Activated CD8-positive, alpha-beta T cell treated with anti-CD3 and anti-CD28 coated beads, Interleukin-2, amount 10 ng/mL, durations not matched to agents 7 days and 5 days (primary cell): ENCODE measurements at regions of chr17 and their contacts with region 1.

Region 1: GRCh38 chr17:7045909-7046724 is 2.2 kb upstream of the SLC16A11 start:
- DNase-seq: peak; percentile 68
- ATAC-seq: peak; percentile 43
- H3K4me3 Mint-ChIP-seq: peak overlapping the region; percentile 73
- H3K27ac Mint-ChIP-seq: peak overlapping the region; percentile 66
- H3K4me1 Mint-ChIP-seq: peaks cover 37% of the 10 kb centered on the region
- H3K27me3 Mint-ChIP-seq: peaks cover 10% of the 10 kb centered on the region

Region 2: DNA sequence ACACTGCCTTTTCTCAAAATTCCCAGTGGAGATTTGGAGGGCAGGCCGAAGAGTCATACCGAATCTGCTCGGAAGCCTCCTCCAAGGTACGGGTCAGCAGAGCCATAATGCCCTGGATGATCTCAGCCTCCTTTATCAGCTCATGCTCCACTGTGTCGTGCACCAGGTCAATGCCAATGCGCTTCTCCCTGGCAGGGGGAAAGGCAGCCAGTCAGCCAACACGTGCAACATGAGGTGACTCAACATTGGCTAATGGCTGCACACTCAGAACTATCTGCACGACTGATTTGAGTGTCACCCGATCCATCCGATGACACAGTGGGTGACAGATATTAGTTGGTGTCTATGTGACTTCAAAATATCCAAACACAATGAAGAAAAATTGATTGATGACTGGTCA is 230.3 kb before region 1 on chr17:
- CTCF ChIA-PET with region 1: no interaction called
- POLR2A ChIA-PET with region 1: no interaction called
- DNase-seq: no peak
- ATAC-seq: no peak
- H3K4me3 Mint-ChIP-seq: no peak overlapping the region
- H3K27ac Mint-ChIP-seq: no peak overlapping the region
- H3K4me1 Mint-ChIP-seq: no peaks in the 10 kb centered on the region
- H3K27me3 Mint-ChIP-seq: peaks cover 30% of the 10 kb centered on the region

Region 3: GRCh38 chr17:7021993-7022778 is 23.9 kb before region 1 on chr17:
- CTCF ChIA-PET with region 1: interaction called, 31 read pairs
- POLR2A ChIA-PET with region 1: interaction called, 4 read pairs
- DNase-seq: peak; percentile 86
- ATAC-seq: peak; percentile 74
- H3K4me3 Mint-ChIP-seq: peak overlapping the region; percentile 8
- H3K27ac Mint-ChIP-seq: peak overlapping the region; percentile 55
- H3K4me1 Mint-ChIP-seq: peaks cover 73% of the 10 kb centered on the region
- H3K27me3 Mint-ChIP-seq: peaks cover 2% of the 10 kb centered on the region

Region 4: DNA sequence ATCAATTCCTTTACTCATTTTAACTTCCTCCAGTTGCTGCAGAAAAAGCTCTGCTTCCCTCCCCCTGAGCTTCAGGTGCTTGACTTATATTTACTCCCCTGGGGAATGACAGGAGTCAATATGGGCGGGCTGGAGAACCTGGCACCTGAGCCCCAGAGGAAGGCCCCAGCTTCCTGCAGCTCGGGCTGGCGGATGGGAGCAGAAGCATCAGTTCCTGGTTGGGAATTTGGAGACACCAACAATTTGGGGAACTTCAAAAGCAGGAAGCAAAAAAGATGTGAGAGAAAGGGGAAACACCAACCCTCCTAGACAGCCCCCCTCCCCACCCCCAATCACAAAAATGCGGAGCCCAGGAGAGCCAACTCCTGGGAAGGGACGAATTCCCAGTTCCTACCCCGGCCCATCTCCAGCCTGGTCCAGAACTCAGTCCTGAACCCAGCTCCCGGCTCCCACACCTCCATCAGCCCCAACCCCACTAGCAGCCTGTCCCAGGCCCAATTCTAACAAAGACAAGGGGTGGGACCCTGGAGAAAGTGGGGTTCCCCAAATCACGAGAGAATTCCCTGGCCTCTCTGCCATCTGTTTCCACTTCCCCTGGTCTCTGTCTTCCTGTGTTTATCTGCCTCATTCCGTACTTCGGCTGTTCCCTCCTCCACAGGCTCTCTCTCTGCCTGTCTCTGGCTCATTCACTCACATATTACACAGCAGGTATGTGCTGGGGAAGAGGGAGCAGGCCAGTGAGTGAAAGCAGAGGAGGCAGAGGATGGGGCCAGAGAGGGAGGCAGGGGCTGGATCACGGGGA is 84.7 kb after region 1 on chr17:
- CTCF ChIA-PET with region 1: interaction called, 395 read pairs
- POLR2A ChIA-PET with region 1: interaction called, 16 read pairs
- DNase-seq: no peak
- ATAC-seq: no peak
- H3K4me3 Mint-ChIP-seq: no peak overlapping the region
- H3K27ac Mint-ChIP-seq: no peak overlapping the region
- H3K4me1 Mint-ChIP-seq: peaks cover 11% of the 10 kb centered on the region
- H3K27me3 Mint-ChIP-seq: peaks cover 10% of the 10 kb centered on the region

Region 5: DNA sequence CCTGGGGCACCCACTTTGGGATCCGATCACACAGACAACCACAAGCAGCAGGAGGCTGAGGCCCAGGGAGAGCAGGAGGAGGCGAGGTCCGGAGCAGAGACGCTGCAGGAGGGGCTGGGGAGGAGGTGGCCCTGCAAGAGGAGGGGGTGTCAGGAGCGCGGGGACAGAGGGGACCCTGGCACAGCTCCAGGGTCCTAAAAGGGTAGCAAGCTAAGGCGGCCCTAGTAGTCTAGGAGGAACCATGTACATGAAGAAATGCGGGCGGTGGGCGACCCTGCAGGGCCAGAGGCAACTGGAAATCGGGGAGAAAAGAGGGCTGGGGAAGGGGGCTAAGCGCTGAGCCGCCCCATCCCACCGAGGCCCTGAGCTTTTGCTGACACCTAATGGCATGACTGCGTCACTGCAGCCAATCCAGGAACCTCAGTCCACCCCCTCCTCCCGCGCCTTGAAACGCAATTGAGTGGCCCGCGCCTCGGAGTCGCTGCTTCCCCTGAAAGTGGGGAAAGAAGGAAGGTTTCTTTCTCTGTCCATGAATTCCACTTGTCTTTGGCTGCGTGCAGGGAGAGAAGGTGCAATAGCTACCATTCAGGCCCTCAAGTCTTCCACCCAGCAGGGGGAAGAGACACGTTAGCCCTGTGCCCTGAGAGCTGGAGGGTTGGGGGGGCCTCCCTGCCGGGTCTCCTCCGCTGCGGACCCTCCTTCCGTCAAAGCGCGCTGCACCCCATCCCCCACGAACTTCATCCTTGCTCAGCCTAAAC is 131.3 kb after region 1 on chr17:
- CTCF ChIA-PET with region 1: interaction called, 59 read pairs
- POLR2A ChIA-PET with region 1: interaction called, 4 read pairs
- DNase-seq: peak; percentile 72
- ATAC-seq: peak; percentile 70
- H3K4me3 Mint-ChIP-seq: peak overlapping the region; percentile 48
- H3K27ac Mint-ChIP-seq: no peak overlapping the region
- H3K4me1 Mint-ChIP-seq: peaks cover 12% of the 10 kb centered on the region
- H3K27me3 Mint-ChIP-seq: peaks cover 14% of the 10 kb centered on the region

Region 6: DNA sequence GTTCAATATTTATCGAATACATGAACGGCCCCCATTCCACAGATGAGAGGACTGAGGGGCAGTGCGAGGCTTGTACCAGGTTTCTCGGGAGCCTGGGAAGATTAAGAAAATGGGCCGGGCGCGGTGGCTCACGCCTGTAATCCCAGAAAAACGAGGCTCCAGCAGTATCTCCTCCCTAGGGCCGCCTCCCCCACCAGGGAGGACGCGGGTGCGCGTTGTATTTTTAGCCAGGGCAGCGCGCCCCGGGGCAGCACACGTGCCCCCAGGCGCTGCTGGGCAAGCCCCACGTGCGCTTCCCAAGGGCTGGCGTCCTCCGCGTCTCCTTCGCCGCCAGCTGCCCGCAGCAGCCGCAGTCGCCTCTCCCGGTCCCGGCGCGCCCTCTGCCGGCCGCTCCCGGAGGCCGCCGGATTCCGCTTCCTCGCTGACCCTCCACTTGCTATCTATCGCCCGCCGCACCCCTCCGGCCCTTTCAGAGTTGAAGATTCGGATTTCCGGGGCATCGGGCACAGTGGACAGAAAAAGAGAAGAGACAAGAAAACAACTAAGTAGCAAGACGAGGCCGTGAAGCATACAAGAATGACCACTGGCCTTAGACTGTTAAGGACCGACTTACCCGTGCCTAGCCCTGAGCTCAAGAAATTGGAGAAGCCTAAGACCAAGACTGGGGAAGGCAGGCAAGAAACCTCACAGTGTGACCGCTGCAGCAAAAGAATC is 250.2 kb after region 1 on chr17:
- CTCF ChIA-PET with region 1: interaction called, 22 read pairs
- POLR2A ChIA-PET with region 1: no interaction called
- DNase-seq: peak; percentile 71
- ATAC-seq: peak; percentile 27
- H3K4me3 Mint-ChIP-seq: peak overlapping the region; percentile 34
- H3K27ac Mint-ChIP-seq: no peak overlapping the region
- H3K4me1 Mint-ChIP-seq: peaks cover 30% of the 10 kb centered on the region
- H3K27me3 Mint-ChIP-seq: peaks cover 38% of the 10 kb centered on the region